Lower lobe of right lung (tissue), 2 donors: ENCODE measurements at regions of chr11 and their contacts with region 1.

Region 1: GRCh38 chr11:61733120-61733978 is 19.1 kb upstream of the MYRF start:
- DNase-seq: peak; percentile 92
- ATAC-seq: peak; percentile 84 to 88
- H3K4me3 ChIP-seq: no peak overlapping the region
- H3K27ac ChIP-seq: peak overlapping the region; percentile 47
- H3K4me1 ChIP-seq: peaks cover 15% of the 10 kb centered on the region
- H3K27me3 ChIP-seq: no peaks in the 10 kb centered on the region
- CTCF ChIP-seq: peak; percentile 100

Region 2: DNA sequence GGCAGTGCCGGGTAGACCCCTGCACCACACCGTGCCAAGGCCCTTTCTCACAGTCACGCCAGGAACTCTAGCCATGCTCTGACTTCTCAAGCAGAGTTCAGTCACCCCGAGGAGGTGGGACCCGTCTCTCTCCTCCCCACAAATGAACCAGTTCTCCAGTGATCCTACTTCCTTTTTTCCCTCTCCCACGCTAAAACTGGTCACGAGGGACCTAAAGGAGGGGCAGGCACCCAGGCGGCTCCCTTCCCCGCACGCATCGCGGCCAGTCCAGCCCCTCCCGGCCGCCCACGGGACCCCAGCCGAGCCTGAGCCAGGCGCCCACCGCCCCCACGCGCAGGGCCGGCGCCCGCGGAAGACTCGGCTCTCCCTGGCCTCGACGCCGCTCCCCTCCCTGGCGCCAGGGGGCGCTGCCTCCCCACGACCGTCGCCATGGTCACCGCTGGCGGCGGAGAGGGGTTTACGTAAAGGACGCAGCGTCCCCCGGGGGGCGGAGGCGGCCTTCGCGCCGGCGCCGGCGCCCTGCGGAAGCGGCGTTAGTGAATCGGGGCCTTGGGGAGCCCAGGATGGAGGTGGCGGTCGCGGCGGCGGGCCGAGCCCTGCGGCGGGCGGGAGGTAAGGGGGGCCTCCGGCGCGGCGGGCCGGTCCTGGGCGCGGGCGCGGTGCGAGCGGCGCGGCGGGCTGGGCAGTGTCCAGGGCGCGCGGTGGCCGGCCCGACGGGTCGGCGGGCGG is 53.3 kb before region 1 on chr11 and contains the start of gene DAGLA:
- intact Hi-C with region 1: loop called (anchors 10 kb)
- DNase-seq: peak; percentile 82
- ATAC-seq: peak; percentile 90 to 95
- H3K4me3 ChIP-seq: peak within 1 kb of the TSS; percentile 56
- H3K27ac ChIP-seq: no peak within 1 kb of the TSS
- H3K4me1 ChIP-seq: peaks cover 15% of the 10 kb centered on the region
- H3K27me3 ChIP-seq: peaks cover 34% of the 10 kb centered on the region
- CTCF ChIP-seq: peak; percentile 91
- total RNA-seq, gene DAGLA: 7.1 TPM